A673 (cell line): ENCODE measurements at regions of chr11 and their contacts with region 1.

Region 1: GRCh38 chr11:63829823-63830489 is 9.0 kb upstream of the MARK2 start:
- DNase-seq: peak; percentile 72
- H3K4me3 ChIP-seq: no peak overlapping the region
- H3K27ac ChIP-seq: no peak overlapping the region
- H3K4me1 ChIP-seq: no peaks in the 10 kb centered on the region
- H3K27me3 ChIP-seq: no peaks in the 10 kb centered on the region
- CTCF ChIP-seq: peak; percentile 67

Region 2: GRCh38 chr11:63694596-63694995 is 135.4 kb before region 1 on chr11:
- CTCF ChIA-PET with region 1: no interaction called
- POLR2A ChIA-PET with region 1: no interaction called
- intact Hi-C with region 1: no loop called
- DNase-seq: no peak
- H3K4me3 ChIP-seq: no peak overlapping the region
- H3K27ac ChIP-seq: peak overlapping the region; percentile 11
- H3K4me1 ChIP-seq: peaks cover 29% of the 10 kb centered on the region
- H3K27me3 ChIP-seq: no peaks in the 10 kb centered on the region
- CTCF ChIP-seq: no peak

Region 3: GRCh38 chr11:63906585-63906984 is 76.6 kb after region 1 on chr11:
- CTCF ChIA-PET with region 1: interaction called, 10 read pairs
- POLR2A ChIA-PET with region 1: no interaction called
- intact Hi-C with region 1: no loop called
- DNase-seq: peak; percentile 51
- H3K4me3 ChIP-seq: no peak overlapping the region
- H3K27ac ChIP-seq: no peak overlapping the region
- H3K4me1 ChIP-seq: peaks cover 10% of the 10 kb centered on the region
- H3K27me3 ChIP-seq: no peaks in the 10 kb centered on the region
- CTCF ChIP-seq: peak; percentile 42; the same call in 1 of the 2 replicates